PC-9 (cell line): ENCODE measurements at regions of chr7 and their contacts with region 1.

Region 1: DNA sequence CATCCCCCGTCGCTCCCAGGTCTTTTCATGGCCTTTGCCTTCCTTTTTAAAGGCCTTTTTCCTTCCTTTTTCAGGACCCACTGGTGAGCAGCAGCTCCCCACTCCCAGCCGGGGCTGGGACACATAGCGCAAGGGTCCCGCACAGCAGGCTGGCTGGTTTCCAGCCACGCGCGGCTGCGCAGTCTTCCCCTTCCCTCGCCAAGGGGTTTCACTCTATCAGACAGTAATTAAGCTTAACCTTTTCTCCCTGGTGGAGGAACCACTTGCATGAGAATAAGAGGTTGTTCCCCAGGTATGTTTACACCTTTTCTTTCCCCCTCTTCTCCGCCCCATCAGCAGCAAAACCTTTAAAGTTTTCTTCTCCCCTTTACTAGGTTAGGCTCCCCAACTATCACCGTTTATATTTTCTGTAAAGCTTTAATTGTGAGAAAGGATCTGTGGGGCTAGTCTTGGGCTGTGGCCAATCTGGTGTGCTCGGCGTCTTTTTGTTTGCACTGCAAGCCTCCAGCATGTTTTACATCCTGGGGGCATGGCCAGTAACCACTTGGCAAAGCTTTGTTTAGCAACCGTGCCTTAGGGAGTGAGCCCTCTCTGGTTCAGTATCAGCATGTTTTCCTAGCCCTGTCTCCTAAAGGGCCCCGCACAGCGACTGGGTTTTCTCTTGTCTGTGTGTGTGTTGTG is 219.6 kb downstream of the PHF14 start:
- DNase-seq: no peak
- H3K4me3 ChIP-seq: no peak overlapping the region
- H3K27ac ChIP-seq: no peak overlapping the region
- H3K4me1 ChIP-seq: no peaks in the 10 kb centered on the region
- H3K27me3 ChIP-seq: no peaks in the 10 kb centered on the region
- CTCF ChIP-seq: no peak

Region 2: GRCh38 chr7:11208883-11209465 is 15.7 kb after region 1 on chr7:
- CTCF ChIA-PET with region 1: no interaction called
- POLR2A ChIA-PET with region 1: no interaction called
- intact Hi-C with region 1: loop called (anchors 1 kb)
- DNase-seq: no peak
- H3K4me3 ChIP-seq: no peak overlapping the region
- H3K27ac ChIP-seq: no peak overlapping the region
- H3K4me1 ChIP-seq: no peaks in the 10 kb centered on the region
- H3K27me3 ChIP-seq: no peaks in the 10 kb centered on the region
- CTCF ChIP-seq: no peak

Region 3: DNA sequence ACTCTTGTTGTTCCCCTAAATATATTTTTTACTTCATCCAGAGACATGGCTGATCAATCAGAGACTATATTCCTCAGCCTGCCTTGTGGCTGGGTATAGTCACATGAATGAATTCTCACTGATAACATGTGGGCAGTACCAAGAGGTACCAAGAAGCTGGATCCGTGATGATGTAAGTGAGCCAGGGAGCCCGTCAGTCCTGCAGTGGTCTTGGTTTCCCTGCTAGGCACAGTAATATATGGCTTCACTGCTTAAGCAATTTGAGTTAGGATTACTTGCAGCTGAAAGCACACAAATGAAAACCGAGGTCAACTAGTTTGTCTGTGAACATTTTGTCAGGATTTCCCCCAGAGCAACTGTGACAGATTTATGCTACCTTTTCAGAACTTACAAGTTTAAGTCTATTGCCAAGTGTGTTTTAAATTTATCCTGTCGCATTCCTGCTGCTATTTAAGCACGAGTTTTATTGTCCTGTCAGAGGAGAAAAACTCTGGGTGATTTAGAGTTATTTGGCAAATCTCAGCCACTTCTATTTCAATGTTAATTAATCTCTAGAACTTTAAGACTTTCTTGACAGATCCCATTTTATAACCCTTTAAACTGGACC is 162.2 kb after region 1 on chr7:
- CTCF ChIA-PET with region 1: no interaction called
- POLR2A ChIA-PET with region 1: no interaction called
- intact Hi-C with region 1: no loop called
- DNase-seq: no peak
- H3K4me3 ChIP-seq: no peak overlapping the region
- H3K27ac ChIP-seq: no peak overlapping the region
- H3K4me1 ChIP-seq: no peaks in the 10 kb centered on the region
- H3K27me3 ChIP-seq: peaks cover 33% of the 10 kb centered on the region
- CTCF ChIP-seq: no peak